HepG2 (cell line): ENCODE measurements at regions of chr12 and their contacts with region 1.

Region 1: DNA sequence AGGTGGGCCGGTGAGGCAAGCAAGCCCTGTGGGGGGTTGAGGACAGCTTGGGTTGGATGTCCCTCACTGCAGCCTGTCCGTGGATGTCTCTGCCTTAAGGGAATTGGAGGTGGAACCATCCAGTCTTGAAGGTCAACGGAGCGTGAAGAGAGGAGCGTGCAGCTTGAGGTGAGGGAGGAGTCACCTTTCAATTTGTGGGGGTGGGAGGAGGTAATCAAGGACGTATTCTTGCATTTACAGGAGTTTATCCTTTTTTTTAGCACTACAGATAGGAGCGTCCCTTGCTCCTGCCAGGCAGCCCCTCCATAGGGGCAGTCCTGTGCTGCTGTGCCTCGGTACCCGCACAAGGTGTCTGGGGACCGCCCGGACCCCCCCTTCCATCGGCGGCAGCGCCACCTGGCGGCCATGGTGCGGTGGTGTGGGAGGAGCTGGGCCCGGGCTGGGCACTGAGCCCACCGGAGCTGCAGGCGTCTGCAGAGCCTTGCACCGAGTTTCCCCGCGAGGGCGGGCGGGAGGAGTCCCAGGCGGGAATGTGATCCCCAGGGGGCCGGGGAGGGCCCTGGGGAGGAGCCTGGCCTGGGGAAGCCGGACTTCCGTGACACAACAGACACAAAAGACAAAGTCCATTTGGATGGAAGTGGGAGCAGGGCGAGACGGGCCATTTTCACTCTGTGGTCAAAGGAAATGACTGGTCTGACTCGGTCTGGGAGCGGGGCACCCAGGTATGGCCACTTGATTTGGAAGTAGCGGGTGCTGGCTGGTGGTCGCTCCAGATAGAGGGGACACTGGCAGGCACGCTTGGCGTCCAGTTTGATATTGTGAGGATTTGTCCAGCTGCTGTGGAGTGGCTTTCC is 923 bp downstream of the DNAJC22 start:
- DNase-seq: peak; percentile 95
- ATAC-seq: peak; percentile 92
- H3K4me3 ChIP-seq: peak overlapping the region; percentile 63 to 86 (median 84)
- H3K27ac ChIP-seq: peak overlapping the region; percentile 85
- H3K4me1 ChIP-seq: peaks cover 64% of the 10 kb centered on the region
- H3K27me3 ChIP-seq: peaks cover 13 to 40% of the 10 kb centered on the region in 2 experiments; a peak in 4 of 5 replicates
- CTCF ChIP-seq: peak; percentile 97
- EP300 ChIP-seq: peak in 1 of 2 experiments; percentile 56; a peak in 1 of 4 replicates
- POLR2A ChIP-seq: peak; percentile 98
- RAD21 ChIP-seq: peak; percentile 73

Region 2: DNA sequence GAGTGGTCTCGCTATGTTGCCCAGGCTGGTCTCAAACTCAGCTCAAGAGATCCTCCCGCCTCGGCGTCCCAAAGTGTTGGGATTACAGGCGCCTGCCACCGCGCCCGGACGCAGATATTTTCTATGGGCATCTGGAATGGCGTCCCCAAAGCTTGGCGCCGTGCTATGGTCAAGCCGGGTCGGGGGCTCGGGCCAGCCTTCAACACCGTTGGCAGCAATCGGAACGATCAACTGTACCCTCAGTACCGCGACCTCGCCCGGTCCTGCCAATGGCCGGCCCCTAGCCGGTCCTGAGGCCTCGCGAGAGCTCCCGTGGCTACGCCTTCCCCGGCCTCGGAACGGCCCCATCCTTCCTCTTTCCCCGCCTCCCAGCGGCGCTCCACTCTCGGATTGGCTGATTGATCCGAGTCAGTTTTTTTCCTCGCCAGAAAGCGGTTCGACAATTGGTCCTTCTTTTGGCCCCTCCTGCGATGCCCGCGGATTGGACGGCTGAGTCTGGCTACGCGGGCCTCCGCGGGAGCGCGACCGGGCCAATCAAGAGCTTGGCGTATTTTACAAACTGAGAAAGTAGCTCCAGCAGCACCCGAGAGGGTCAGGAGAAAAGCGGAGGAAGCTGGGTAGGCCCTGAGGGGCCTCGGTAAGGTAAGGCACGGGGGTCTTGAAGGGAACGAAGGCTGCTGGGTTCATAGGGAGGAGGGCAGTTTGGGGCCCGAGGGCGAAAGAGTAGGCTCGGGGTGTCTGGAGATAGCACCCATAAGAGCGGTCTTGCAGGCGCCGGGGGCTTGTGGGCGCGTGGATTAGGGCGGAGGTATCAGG is 24.7 kb before region 1 on chr12 and contains the start of gene TROAP:
- CTCF ChIA-PET with region 1: no interaction called
- POLR2A ChIA-PET with region 1: interaction called, 10 read pairs
- in situ Hi-C with region 1: no loop called
- intact Hi-C with region 1: loop called (anchors 1 kb)
- DNase-seq: peak; percentile 97
- ATAC-seq: peak; percentile 99
- H3K4me3 ChIP-seq: peak within 1 kb of the TSS; percentile 81 to 98 (median 96)
- H3K27ac ChIP-seq: peak within 1 kb of the TSS; percentile 75
- H3K4me1 ChIP-seq: peaks cover 15% of the 10 kb centered on the region
- H3K27me3 ChIP-seq: peaks cover 0 to 4% of the 10 kb centered on the region in 2 experiments; a peak in 1 of 5 replicates
- CTCF ChIP-seq: no peak
- EP300 ChIP-seq: no peak
- POLR2A ChIP-seq: peak; percentile 68 to 83
- RAD21 ChIP-seq: no peak
- total RNA-seq, gene TROAP: 27.0 and 30.9 TPM in 2 replicates

Region 3: GRCh38 chr12:49331380-49332222 is 16.0 kb before region 1 on chr12:
- CTCF ChIA-PET with region 1: interaction called, 56 read pairs
- POLR2A ChIA-PET with region 1: interaction called, 18 read pairs
- in situ Hi-C with region 1: no loop called
- intact Hi-C with region 1: loop called (anchors 1 kb)
- DNase-seq: peak; percentile 53
- ATAC-seq: peak; percentile 89
- H3K4me3 ChIP-seq: no peak overlapping the region
- H3K27ac ChIP-seq: no peak overlapping the region
- H3K4me1 ChIP-seq: peaks cover 21% of the 10 kb centered on the region
- H3K27me3 ChIP-seq: peaks cover 0 to 12% of the 10 kb centered on the region in 2 experiments; a peak in 3 of 5 replicates
- CTCF ChIP-seq: peak; percentile 88
- EP300 ChIP-seq: no peak
- POLR2A ChIP-seq: no peak
- RAD21 ChIP-seq: peak; percentile 84

Region 4: GRCh38 chr12:49583366-49584094 is 235.9 kb after region 1 on chr12:
- CTCF ChIA-PET with region 1: no interaction called
- POLR2A ChIA-PET with region 1: no interaction called
- in situ Hi-C with region 1: no loop called
- intact Hi-C with region 1: no loop called
- DNase-seq: no peak
- ATAC-seq: no peak
- H3K4me3 ChIP-seq: no peak overlapping the region
- H3K27ac ChIP-seq: no peak overlapping the region
- H3K4me1 ChIP-seq: peaks cover 25% of the 10 kb centered on the region
- H3K27me3 ChIP-seq: no peaks in the 10 kb centered on the region
- CTCF ChIP-seq: no peak
- EP300 ChIP-seq: no peak
- POLR2A ChIP-seq: no peak
- RAD21 ChIP-seq: no peak